ENCODE measurements at regions of chr4 and their contacts with region 1.

Region 1: DNA sequence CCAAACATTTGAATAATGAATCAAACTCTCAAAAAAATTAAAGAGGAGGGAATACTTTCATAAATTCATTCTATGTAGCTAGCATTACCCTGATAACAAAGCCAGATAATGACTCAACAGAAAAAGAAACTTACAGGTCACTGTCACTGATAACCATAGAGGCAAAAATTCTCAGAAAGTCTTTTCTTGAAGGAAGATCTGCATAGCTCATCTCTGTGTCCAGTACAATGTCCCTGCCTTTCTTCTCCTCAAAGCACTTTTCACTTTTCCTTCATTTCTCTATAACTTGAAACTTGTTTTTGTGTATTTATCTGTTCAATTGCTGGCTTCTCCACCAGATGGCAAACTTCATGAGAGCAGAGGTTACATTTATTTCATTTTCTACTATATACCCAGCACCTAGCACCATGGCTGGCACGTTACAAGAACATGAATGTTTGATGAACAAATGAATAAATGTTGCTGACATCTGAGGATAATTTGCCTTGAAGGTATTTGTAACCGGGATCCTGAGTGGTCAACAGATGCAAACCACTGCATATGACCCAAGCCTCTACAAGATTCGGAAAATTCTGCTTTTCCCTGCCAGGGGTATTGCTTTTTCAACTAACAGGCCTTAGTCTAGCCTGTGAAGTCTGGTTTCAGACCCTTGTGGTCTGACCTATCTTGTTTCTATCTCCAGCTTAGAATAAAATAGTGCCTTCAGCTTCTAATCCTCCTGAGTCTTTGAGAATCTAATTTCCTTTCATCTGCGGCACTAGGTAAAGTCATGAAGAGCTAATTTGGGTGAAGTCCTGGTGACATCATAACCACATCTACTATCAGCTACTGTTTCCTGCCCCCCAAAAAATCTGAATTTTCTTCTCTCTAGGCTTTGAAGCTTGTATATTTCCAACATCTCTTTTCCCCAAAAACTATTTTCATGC is 52.5 kb upstream of the ANTXR2 start:
- DNase-seq: peak; percentile 65
- H3K4me3 ChIP-seq: no peak overlapping the region
- H3K27ac ChIP-seq: peak overlapping the region; percentile 82
- H3K4me1 ChIP-seq: peaks cover 43% of the 10 kb centered on the region
- H3K27me3 ChIP-seq: no peaks in the 10 kb centered on the region
- CTCF ChIP-seq: peak; percentile 40
- POLR2A ChIP-seq: no peak

Region 2: DNA sequence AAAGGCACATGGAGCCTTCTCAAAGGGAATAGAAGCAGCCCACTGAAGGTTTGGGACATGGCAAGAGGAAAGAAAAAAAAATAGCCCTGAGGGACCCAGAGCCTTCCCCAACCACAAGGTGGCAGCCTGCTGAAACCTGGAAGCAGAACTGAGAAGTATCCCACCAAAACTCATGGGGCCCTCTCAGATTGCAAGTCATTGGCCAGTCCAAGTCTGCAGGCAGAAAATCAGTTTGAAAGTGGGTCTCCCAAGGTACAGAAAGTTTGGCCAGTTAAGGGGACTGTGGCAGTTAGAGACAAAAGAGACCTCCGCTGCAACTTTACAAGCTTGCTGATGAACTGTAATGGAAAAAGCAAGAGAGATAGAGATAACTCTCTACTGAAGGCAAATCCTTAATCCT is 208.3 kb before region 1 on chr4:
- CTCF ChIA-PET with region 1: no interaction called
- POLR2A ChIA-PET with region 1: no interaction called
- dilution Hi-C with region 1: no loop called
- intact Hi-C with region 1: loop called (anchors 5 kb)
- DNase-seq: peak; percentile 62
- H3K4me3 ChIP-seq: no peak overlapping the region
- H3K27ac ChIP-seq: no peak overlapping the region
- H3K4me1 ChIP-seq: no peaks in the 10 kb centered on the region
- H3K27me3 ChIP-seq: no peaks in the 10 kb centered on the region
- CTCF ChIP-seq: peak; percentile 73 to 78
- POLR2A ChIP-seq: no peak

Region 3: GRCh38 chr4:80767944-80768343 is 642.4 kb after region 1 on chr4:
- CTCF ChIA-PET with region 1: no interaction called
- POLR2A ChIA-PET with region 1: no interaction called
- dilution Hi-C with region 1: no loop called
- intact Hi-C with region 1: no loop called
- DNase-seq: no peak
- H3K4me3 ChIP-seq: no peak overlapping the region
- H3K27ac ChIP-seq: no peak overlapping the region
- H3K4me1 ChIP-seq: no peaks in the 10 kb centered on the region
- H3K27me3 ChIP-seq: no peaks in the 10 kb centered on the region
- CTCF ChIP-seq: no peak
- POLR2A ChIP-seq: no peak

Measured in endothelial cell of umbilical vein (primary cell).